Activated B cell treated with CpG ODN at 0.5 μM for 24 hours (primary cell): ENCODE measurements at regions of chr19 and their contacts with region 1.

Region 1: DNA sequence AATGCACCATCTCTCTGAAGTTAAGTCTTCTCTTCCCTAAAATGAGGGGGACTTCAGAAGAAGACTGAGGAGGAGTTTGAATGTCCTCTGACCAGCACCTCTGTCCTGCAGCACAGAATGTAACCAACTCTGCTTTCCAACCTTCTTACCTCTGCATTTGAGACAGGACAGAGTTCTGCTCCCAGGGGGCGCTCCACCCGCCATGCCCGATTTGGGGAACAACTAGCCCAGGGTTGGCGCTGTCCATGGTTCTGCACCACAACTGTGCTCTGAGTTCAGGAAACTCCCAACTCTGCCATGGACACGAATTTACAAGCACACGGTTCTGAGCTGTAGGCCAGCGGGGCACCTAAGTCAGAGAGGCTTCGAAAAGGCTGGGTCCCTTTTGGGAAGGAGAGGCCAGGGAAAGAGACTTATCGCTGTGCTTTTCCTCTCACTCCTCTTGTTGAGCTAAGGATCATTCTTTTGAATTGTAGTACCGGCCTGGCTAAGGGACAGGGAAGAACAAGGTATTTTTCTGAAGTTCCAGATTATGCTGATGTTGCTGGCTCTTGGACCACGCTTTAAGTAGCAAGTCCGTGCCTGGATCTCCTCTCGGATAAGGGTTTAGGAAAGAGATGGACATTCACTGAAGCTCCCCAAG is 22.2 kb downstream of the SIGLEC5 start:
- DNase-seq: peak; percentile 54
- ATAC-seq: no peak
- H3K4me3 Mint-ChIP-seq: no peak overlapping the region
- H3K27ac Mint-ChIP-seq: peak overlapping the region; percentile 88
- H3K4me1 Mint-ChIP-seq: peaks cover 63% of the 10 kb centered on the region
- H3K27me3 Mint-ChIP-seq: no peaks in the 10 kb centered on the region
- CTCF ChIP-seq: no peak

Region 2: DNA sequence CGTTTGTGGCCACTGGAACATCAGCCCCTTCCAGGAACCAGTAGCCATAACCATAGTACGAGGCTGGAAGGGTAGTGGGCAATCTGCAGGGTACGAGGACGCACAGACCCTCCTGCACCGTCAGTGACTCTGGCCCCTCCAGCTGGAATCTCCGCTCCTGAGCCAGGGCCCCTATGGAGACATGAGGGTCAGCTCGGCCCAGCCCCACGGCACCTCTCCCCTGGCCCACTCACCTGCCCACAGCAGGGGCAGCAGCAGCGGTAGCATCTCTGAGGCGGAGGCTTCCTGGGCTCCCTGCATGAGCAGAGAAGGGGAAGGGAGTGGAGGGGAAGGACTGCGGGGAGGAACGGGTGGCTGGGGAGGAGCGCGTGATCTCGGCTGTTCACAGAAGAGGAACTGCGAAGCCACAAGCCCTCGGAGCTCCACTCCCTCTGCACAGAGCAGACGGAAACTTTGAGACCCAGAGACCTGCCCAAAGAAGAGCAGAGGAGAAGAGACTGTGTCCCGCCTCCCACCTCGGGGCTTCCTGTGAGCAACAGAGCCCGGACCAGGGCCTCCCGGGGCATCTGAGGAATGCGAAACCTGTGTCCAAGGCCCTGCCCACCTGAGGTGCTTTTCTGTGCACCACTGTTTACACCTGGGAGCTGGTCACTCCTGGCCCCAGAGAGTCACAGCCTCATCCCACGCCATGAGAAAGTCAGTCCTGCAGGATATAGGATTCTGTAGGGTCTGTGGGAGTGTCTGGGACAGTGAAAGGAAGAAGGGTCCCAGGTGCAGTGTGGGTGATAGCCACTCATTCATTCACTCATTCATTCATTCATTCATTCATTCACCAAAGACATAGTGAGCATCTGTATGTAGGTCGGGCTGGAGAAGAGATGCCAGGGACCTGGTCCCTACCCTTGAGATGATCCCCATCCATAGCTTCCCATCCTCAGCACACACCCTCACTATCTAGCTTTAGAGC is 76.4 kb before region 1 on chr19 and contains the start of gene SIGLEC6:
- CTCF ChIA-PET with region 1: no interaction called
- POLR2A ChIA-PET with region 1: interaction called, 5 read pairs
- intact Hi-C with region 1: loop called (anchors 1 kb)
- DNase-seq: peak; percentile 60
- ATAC-seq: peak; percentile 97
- H3K4me3 Mint-ChIP-seq: peak within 1 kb of the TSS; percentile 83
- H3K27ac Mint-ChIP-seq: peak within 1 kb of the TSS; percentile 83
- H3K4me1 Mint-ChIP-seq: peaks cover 88% of the 10 kb centered on the region
- H3K27me3 Mint-ChIP-seq: no peaks in the 10 kb centered on the region
- CTCF ChIP-seq: no peak
- total RNA-seq, gene SIGLEC6: 16.4 and 28.7 TPM in 2 replicates

Region 3: DNA sequence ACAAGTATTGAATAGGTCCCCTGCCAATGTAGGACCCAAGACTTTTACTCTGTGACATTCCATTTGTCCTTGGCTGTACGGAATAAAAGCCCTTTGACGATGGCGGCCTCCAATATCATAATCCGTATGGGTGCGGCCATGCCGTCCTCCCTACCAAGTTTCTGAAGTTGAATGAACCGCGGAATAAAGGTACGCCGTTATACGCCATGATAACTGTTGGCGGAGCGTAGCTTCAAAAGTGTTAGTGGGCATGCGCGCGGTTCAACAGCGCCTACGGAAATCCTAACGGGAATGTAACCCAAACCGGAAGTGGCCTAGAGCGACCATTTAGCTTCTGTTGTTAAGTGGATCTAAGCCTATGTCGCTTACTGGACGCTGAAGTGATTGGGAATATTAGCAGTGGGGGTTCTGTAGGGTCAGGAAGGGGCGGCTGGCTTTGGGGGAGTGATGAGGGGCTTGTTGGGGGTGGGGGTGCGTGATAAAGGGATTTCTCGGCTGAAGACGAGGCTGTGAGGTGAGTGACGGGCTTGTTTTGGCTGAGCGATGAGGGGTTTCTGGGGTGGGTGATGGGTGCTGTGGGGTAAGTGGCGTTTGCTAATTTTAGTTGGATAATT is 37.0 kb before region 1 on chr19 and contains the start of gene ZNF175:
- CTCF ChIA-PET with region 1: no interaction called
- POLR2A ChIA-PET with region 1: interaction called, 7 read pairs
- intact Hi-C with region 1: loop called (anchors 1 kb)
- DNase-seq: peak; percentile 68
- ATAC-seq: peak; percentile 93
- H3K4me3 Mint-ChIP-seq: peak within 1 kb of the TSS; percentile 96
- H3K27ac Mint-ChIP-seq: peak within 1 kb of the TSS; percentile 86
- H3K4me1 Mint-ChIP-seq: peaks cover 38% of the 10 kb centered on the region
- H3K27me3 Mint-ChIP-seq: no peaks in the 10 kb centered on the region
- CTCF ChIP-seq: no peak
- total RNA-seq, gene ZNF175: 20.6 and 23.6 TPM in 2 replicates

Region 4: GRCh38 chr19:51621178-51621577 is 13.1 kb after region 1 on chr19:
- CTCF ChIA-PET with region 1: interaction called, 3 read pairs
- POLR2A ChIA-PET with region 1: interaction called, 9 read pairs
- intact Hi-C with region 1: loop called (anchors 1 kb)
- DNase-seq: no peak
- ATAC-seq: peak; percentile 87
- H3K4me3 Mint-ChIP-seq: no peak overlapping the region
- H3K27ac Mint-ChIP-seq: peak overlapping the region; percentile 21
- H3K4me1 Mint-ChIP-seq: peaks cover 24% of the 10 kb centered on the region
- H3K27me3 Mint-ChIP-seq: no peaks in the 10 kb centered on the region
- CTCF ChIP-seq: no peak

Region 5: GRCh38 chr19:51703575-51704515 is 95.8 kb after region 1 on chr19:
- CTCF ChIA-PET with region 1: no interaction called
- POLR2A ChIA-PET with region 1: interaction called, 3 read pairs
- intact Hi-C with region 1: loop called (anchors 5 kb)
- DNase-seq: peak; percentile 98
- ATAC-seq: peak; percentile 92
- H3K4me3 Mint-ChIP-seq: peak overlapping the region; percentile 88
- H3K27ac Mint-ChIP-seq: peak overlapping the region; percentile 85
- H3K4me1 Mint-ChIP-seq: peaks cover 33% of the 10 kb centered on the region
- H3K27me3 Mint-ChIP-seq: peaks cover 16% of the 10 kb centered on the region
- CTCF ChIP-seq: no peak

Region 6: GRCh38 chr19:52065399-52065798 is 457.4 kb after region 1 on chr19:
- CTCF ChIA-PET with region 1: no interaction called
- POLR2A ChIA-PET with region 1: no interaction called
- intact Hi-C with region 1: no loop called
- DNase-seq: no peak
- ATAC-seq: no peak
- H3K4me3 Mint-ChIP-seq: no peak overlapping the region
- H3K27ac Mint-ChIP-seq: no peak overlapping the region
- H3K4me1 Mint-ChIP-seq: no peaks in the 10 kb centered on the region
- H3K27me3 Mint-ChIP-seq: no peaks in the 10 kb centered on the region
- CTCF ChIP-seq: no peak